Activated CD8-positive, alpha-beta T cell treated with anti-CD3 and anti-CD28 coated beads for 36 hours (primary cell): ENCODE measurements at regions of chr11 and their contacts with region 1.

Region 1: DNA sequence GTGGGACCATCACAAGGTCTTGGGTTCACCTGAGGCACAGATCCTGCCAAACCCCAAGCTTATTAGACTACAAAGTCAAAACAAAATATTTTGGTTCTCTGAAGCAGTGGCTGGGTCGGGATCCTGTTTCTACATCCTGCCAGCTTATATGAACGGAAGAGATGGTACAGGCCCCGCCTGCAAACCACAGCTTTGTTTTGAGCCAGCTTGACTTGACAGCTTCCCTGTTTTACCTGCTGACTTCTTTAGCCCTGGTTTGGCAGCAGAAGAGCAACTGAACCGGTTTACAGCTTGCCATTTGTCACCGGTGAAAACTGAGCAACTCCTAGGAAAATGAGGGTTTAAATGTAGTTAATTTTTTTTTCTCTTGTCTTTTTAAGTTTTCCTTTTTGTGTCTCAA is 11.4 kb downstream of the PACS1 start:
- DNase-seq: peak; percentile 89
- ATAC-seq: peak; percentile 83
- H3K4me3 Mint-ChIP-seq: peak overlapping the region; percentile 75
- H3K27ac Mint-ChIP-seq: peak overlapping the region; percentile 99
- H3K4me1 Mint-ChIP-seq: peaks cover 89% of the 10 kb centered on the region
- H3K27me3 Mint-ChIP-seq: no peaks in the 10 kb centered on the region
- CTCF ChIP-seq: no peak

Region 2: GRCh38 chr11:65880844-65881470 is 200.5 kb before region 1 on chr11:
- CTCF ChIA-PET with region 1: no interaction called
- POLR2A ChIA-PET with region 1: no interaction called
- intact Hi-C with region 1: no loop called
- DNase-seq: peak; percentile 56
- ATAC-seq: peak; percentile 35
- H3K4me3 Mint-ChIP-seq: peak overlapping the region; percentile 89
- H3K27ac Mint-ChIP-seq: peak overlapping the region; percentile 91
- H3K4me1 Mint-ChIP-seq: peaks cover 62% of the 10 kb centered on the region
- H3K27me3 Mint-ChIP-seq: no peaks in the 10 kb centered on the region
- CTCF ChIP-seq: no peak

Region 3: GRCh38 chr11:66051766-66052663 is 29.5 kb before region 1 on chr11 and contains the start of gene SF3B2:
- CTCF ChIA-PET with region 1: no interaction called
- POLR2A ChIA-PET with region 1: interaction called, 11 read pairs
- intact Hi-C with region 1: no loop called
- DNase-seq: peak; percentile 98
- ATAC-seq: peak; percentile 99
- H3K4me3 Mint-ChIP-seq: peak within 1 kb of the TSS; percentile 94
- H3K27ac Mint-ChIP-seq: peak within 1 kb of the TSS; percentile 92
- H3K4me1 Mint-ChIP-seq: peaks cover 34% of the 10 kb centered on the region
- H3K27me3 Mint-ChIP-seq: peaks cover 7% of the 10 kb centered on the region
- CTCF ChIP-seq: no peak
- total RNA-seq, gene SF3B2: 255 to 278 TPM

Region 4: GRCh38 chr11:66359662-66360087 is 278.2 kb after region 1 on chr11:
- CTCF ChIA-PET with region 1: no interaction called
- POLR2A ChIA-PET with region 1: no interaction called
- intact Hi-C with region 1: no loop called
- DNase-seq: no peak
- ATAC-seq: no peak
- H3K4me3 Mint-ChIP-seq: no peak overlapping the region
- H3K27ac Mint-ChIP-seq: no peak overlapping the region
- H3K4me1 Mint-ChIP-seq: no peaks in the 10 kb centered on the region
- H3K27me3 Mint-ChIP-seq: no peaks in the 10 kb centered on the region
- CTCF ChIP-seq: no peak